Activated naive CD4-positive, alpha-beta T cell treated with anti-CD3 and anti-CD28 coated beads for 36 hours (primary cell): ENCODE measurements at regions of chr12 and their contacts with region 1.

Region 1: GRCh38 chr12:11981121-11981733 is 89.5 kb upstream of the BCL2L14 start:
- DNase-seq: peak; percentile 72
- H3K4me3 Mint-ChIP-seq: no peak overlapping the region
- H3K27ac Mint-ChIP-seq: peak overlapping the region; percentile 98
- H3K4me1 Mint-ChIP-seq: peaks cover 51% of the 10 kb centered on the region
- H3K27me3 Mint-ChIP-seq: no peaks in the 10 kb centered on the region

Region 2: GRCh38 chr12:11730299-11731041 is 250.8 kb before region 1 on chr12:
- CTCF ChIA-PET with region 1: interaction called, 3 read pairs
- intact Hi-C with region 1: loop called (anchors 1 kb)
- DNase-seq: peak; percentile 27
- H3K4me3 Mint-ChIP-seq: no peak overlapping the region
- H3K27ac Mint-ChIP-seq: peak overlapping the region; percentile 85
- H3K4me1 Mint-ChIP-seq: peaks cover 86% of the 10 kb centered on the region
- H3K27me3 Mint-ChIP-seq: no peaks in the 10 kb centered on the region

Region 3: GRCh38 chr12:11812586-11813427 is 168.4 kb before region 1 on chr12:
- CTCF ChIA-PET with region 1: no interaction called
- intact Hi-C with region 1: loop called (anchors 1 kb)
- DNase-seq: peak; percentile 39
- H3K4me3 Mint-ChIP-seq: peak overlapping the region; percentile 51
- H3K27ac Mint-ChIP-seq: peak overlapping the region; percentile 32
- H3K4me1 Mint-ChIP-seq: peaks cover 55% of the 10 kb centered on the region
- H3K27me3 Mint-ChIP-seq: no peaks in the 10 kb centered on the region

Region 4: GRCh38 chr12:11901701-11902524 is 79.3 kb before region 1 on chr12:
- CTCF ChIA-PET with region 1: no interaction called
- intact Hi-C with region 1: loop called (anchors 1 kb)
- DNase-seq: peak; percentile 56
- H3K4me3 Mint-ChIP-seq: peak overlapping the region; percentile 54
- H3K27ac Mint-ChIP-seq: peak overlapping the region; percentile 79
- H3K4me1 Mint-ChIP-seq: peaks cover 35% of the 10 kb centered on the region
- H3K27me3 Mint-ChIP-seq: no peaks in the 10 kb centered on the region

Region 5: DNA sequence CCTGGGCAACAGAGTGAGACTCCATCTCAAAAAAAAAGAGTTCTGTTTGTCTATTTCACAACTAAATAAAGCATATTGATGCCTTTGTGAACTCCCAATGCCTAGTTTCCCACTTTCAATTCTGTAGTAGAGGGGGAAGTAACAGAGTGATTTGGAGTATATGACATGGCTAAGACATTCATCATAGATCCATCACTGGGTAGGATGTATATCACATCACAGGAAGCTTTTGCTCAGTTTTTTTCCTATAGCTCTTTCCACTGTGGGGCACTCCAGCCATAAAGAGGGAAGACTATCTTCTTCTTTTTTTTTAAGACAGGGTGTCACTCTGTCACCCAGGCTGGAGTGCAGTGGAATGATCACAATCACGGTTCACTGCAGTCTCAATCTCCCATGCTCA is 64.5 kb before region 1 on chr12:
- CTCF ChIA-PET with region 1: no interaction called
- intact Hi-C with region 1: no loop called
- DNase-seq: no peak
- H3K4me3 Mint-ChIP-seq: no peak overlapping the region
- H3K27ac Mint-ChIP-seq: no peak overlapping the region
- H3K4me1 Mint-ChIP-seq: no peaks in the 10 kb centered on the region
- H3K27me3 Mint-ChIP-seq: no peaks in the 10 kb centered on the region

Region 6: GRCh38 chr12:11998944-11999315 is 17.7 kb after region 1 on chr12:
- CTCF ChIA-PET with region 1: interaction called, 5 read pairs
- intact Hi-C with region 1: loop called (anchors 1 kb)
- DNase-seq: no peak
- H3K4me3 Mint-ChIP-seq: no peak overlapping the region
- H3K27ac Mint-ChIP-seq: peak overlapping the region; percentile 50
- H3K4me1 Mint-ChIP-seq: peaks cover 23% of the 10 kb centered on the region
- H3K27me3 Mint-ChIP-seq: no peaks in the 10 kb centered on the region

Region 7: DNA sequence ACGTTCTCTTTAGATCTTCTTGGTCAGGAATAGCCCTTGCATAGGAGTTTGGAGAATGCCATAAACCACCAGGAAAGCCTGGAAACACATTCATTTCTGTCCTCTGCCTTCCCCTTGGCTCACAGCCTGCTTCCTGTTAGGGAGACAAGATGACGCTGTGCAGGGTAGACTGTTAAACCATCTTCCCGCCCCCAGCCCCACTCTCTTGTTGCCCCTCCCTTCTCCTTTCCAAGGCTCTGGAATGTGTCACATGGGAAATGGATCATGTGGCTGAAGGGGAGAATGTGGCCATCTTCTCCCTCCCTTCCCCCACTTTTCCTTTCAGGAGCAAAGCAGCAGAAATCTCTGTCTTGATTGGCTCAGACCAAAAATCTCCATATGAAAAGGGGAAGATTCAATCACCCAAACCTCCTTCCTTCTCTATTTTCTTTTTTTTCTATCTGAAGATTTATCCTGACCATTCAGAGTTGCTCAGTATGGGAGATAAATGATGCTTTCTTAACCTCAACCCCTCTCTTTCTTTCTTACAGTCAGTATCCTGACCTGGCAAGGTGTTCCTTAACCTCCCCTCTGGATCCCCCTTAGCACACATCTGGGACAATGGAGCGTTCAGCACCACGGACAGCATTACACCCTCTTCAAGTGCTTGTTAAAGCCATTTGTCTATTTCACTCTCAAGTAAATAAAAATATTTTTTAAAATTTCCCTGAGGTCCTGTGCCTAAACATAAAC is 703.3 kb after region 1 on chr12:
- CTCF ChIA-PET with region 1: no interaction called
- intact Hi-C with region 1: no loop called
- DNase-seq: peak; percentile 57
- H3K4me3 Mint-ChIP-seq: no peak overlapping the region
- H3K27ac Mint-ChIP-seq: no peak overlapping the region
- H3K4me1 Mint-ChIP-seq: peaks cover 6% of the 10 kb centered on the region
- H3K27me3 Mint-ChIP-seq: no peaks in the 10 kb centered on the region